Gastrocnemius medialis (tissue), 4 donors: ENCODE measurements at regions of chr11 and their contacts with region 1.

Region 1: DNA sequence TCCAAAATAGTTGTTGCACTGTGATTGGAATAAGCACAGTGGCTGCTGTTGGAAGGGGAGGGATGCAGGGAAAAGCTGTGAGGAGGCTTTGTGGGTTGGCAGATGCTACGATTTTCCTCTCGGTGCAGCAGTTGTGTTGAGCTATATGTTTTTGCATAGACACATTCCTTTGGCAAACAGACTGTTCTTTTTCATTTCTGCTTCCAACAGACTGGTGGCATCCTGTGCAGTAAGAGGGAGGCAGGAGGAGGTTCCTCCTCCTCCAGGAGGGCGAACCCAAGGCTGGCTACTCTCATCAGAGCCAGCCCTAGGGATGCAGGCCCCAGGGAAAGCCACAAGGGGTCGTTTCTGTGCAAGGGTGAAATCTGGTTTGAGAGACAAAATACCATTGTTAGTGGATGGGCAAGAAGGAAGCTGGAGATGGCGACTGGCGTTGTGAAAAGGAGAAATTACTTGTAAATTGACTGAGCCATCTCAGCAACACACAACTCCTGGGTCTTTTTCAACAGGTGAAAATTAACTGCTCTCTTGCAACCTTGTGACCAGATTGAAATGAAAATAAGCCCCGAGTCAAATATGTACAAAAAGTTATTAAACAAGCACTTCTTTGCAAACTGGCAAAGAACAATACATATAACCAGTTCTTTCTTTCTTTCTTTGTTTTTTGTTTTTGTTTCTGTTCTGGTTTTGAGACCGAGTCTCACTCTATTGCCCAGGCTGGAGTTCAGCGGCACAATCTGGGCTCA is 26.5 kb upstream of the UBASH3B start:
- DNase-seq: peak; percentile 5 to 24
- ATAC-seq: peak; percentile 54 to 60
- H3K4me3 ChIP-seq: no peak overlapping the region
- H3K27ac ChIP-seq: no peak overlapping the region
- H3K4me1 ChIP-seq: no peaks in the 10 kb centered on the region
- H3K27me3 ChIP-seq: no peaks in the 10 kb centered on the region
- CTCF ChIP-seq: peak in 4 of 5 experiments; percentile 24 to 58 (median 44)
- POLR2A ChIP-seq: no peak

Region 2: DNA sequence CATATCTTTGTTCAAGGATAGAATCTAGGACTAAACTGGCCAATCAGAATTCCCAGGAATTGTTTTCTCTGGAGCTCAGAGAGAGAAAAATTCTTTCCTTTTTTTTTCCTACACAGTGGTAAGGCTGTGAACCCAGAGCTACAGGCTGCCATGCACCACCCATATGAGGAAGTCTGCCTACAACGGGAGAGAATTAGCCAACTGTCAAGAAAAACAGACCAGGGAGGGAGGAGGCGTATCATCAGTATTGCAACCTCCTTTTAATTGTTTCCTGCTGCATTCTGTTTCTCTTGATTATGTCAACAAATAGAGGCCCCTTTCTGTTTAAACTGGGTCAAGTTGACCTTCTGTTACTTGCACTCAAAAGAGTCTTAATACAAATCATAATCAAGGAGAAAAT is 150.0 kb before region 1 on chr11:
- in situ Hi-C with region 1: no loop called
- intact Hi-C with region 1: no loop called
- DNase-seq: no peak
- ATAC-seq: no peak
- H3K4me3 ChIP-seq: no peak overlapping the region
- H3K27ac ChIP-seq: no peak overlapping the region
- H3K4me1 ChIP-seq: no peaks in the 10 kb centered on the region
- H3K27me3 ChIP-seq: no peaks in the 10 kb centered on the region
- CTCF ChIP-seq: no peak
- POLR2A ChIP-seq: no peak

Region 3: DNA sequence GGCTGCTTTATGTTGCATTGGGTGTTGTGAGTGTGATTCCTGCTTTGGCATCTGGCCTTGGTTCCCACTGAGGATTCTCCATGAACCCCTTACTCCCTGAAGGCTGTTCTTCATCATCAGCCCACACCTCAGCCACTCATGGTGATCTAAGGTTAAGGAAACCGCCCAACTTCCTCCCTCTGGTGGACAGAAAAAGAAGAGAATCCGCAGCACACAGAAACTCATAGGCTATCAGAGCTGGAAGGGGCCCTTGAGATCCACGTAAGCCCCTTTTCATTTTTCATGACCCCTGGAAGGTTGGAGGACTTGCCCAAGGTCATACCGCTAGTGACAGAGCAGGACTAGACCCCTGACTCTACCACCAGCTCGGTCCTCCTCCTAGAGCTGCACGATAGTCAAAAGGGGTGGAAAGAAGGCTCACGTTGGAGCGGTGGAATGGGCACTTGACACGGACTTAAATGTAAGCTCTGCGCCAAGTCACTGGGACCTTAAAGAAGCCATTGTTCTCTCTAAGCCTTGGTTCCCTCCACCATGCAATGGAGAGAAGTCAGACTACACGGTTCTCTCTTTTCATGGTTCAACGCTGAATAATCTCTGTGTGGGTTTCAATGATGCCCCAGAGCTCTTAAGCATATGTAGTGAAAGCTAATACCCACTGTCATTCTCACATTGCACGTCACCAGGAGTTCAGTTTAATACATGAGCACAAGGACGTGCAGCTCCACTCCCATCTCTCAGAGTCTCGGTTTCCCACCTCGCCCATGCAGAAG is 125.8 kb after region 1 on chr11:
- in situ Hi-C with region 1: loop called in 1 of 4 experiments (anchors 25 kb)
- intact Hi-C with region 1: no loop called
- DNase-seq: no peak
- ATAC-seq: no peak
- H3K4me3 ChIP-seq: no peak overlapping the region
- H3K27ac ChIP-seq: no peak overlapping the region
- H3K4me1 ChIP-seq: no peaks in the 10 kb centered on the region
- H3K27me3 ChIP-seq: no peaks in the 10 kb centered on the region
- CTCF ChIP-seq: no peak
- POLR2A ChIP-seq: no peak

Region 4: GRCh38 chr11:122781378-122782195 is 152.6 kb after region 1 on chr11:
- in situ Hi-C with region 1: loop called in 3 of 4 experiments (anchors 5 to 10 kb)
- intact Hi-C with region 1: loop called (anchors 1 kb)
- DNase-seq: peak; percentile 75 to 76
- ATAC-seq: peak; percentile 77 to 86
- H3K4me3 ChIP-seq: no peak overlapping the region
- H3K27ac ChIP-seq: no peak overlapping the region
- H3K4me1 ChIP-seq: peaks cover 11 to 15% of the 10 kb centered on the region in 2 donors
- H3K27me3 ChIP-seq: no peaks in the 10 kb centered on the region
- CTCF ChIP-seq: peak; percentile 65 to 88 (median 82)
- POLR2A ChIP-seq: no peak